IMR-90 (cell line): ENCODE measurements at regions of chr4 and their contacts with region 1.

Region 1: DNA sequence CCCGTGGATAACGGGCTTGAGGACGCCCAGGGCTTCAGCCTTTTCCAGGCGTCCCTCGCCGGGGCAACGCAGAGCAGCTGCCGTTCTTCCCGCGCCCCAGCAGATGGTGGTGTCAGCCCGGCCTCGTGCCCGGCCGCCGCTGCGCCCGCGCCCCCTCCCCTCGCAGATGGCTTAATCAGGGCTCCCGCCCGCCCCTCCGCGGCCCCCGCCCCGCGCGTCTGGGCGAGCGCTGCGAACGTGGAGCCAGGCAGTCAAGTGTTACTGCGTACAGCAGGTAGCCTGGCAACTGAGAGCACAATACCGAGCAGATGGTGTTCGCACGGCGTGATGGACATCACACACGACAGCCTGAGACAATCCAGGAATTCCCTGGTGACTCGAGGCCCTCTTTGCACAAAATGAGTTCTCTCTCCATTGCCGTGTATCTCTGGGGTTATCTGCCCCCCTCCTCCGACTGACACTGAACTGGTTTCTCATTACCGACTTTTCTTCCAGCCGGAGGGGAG is 69.3 kb downstream of the MGST2 start:
- DNase-seq: peak; percentile 75
- ATAC-seq: peak; percentile 96
- H3K4me3 ChIP-seq: peak overlapping the region; percentile 52
- H3K27ac ChIP-seq: peak overlapping the region; percentile 15
- H3K4me1 ChIP-seq: peaks cover 6% of the 10 kb centered on the region
- H3K27me3 ChIP-seq: no peaks in the 10 kb centered on the region
- CTCF ChIP-seq: peak; percentile 77
- POLR2A ChIP-seq: no peak
- RAD21 ChIP-seq: peak; percentile 85

Region 2: GRCh38 chr4:139656614-139657486 is 78.1 kb before region 1 on chr4:
- CTCF ChIA-PET with region 1: interaction called, 4 read pairs
- POLR2A ChIA-PET with region 1: no interaction called
- dilution Hi-C with region 1: no loop called
- in situ Hi-C with region 1: no loop called
- intact Hi-C with region 1: loop called (anchors 5 kb)
- DNase-seq: peak; percentile 78
- ATAC-seq: peak; percentile 92
- H3K4me3 ChIP-seq: no peak overlapping the region
- H3K27ac ChIP-seq: peak overlapping the region; percentile 18; the same call in 1 of the 2 replicates
- H3K4me1 ChIP-seq: peaks cover 6% of the 10 kb centered on the region
- H3K27me3 ChIP-seq: no peaks in the 10 kb centered on the region
- CTCF ChIP-seq: peak; percentile 93
- POLR2A ChIP-seq: no peak
- RAD21 ChIP-seq: peak; percentile 52

Region 3: DNA sequence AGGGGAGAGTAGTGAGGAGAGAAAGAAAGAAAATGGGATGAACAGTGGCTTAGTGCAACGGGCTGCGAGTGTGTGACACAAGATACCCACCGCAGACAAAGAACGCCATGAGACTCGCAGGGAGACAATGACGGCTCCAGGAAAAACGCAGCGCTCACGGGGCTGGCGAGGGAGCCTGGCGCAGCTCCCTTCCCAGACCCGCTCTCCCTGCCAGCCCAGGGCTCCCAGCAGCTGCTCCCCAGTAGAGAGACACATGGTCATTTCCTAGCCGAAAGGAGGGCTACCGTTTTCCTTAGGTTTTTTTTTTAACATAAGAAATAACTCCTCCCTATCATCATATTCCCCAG is 269.6 kb after region 1 on chr4:
- CTCF ChIA-PET with region 1: interaction called, 5 read pairs
- POLR2A ChIA-PET with region 1: no interaction called
- dilution Hi-C with region 1: no loop called
- in situ Hi-C with region 1: loop called (anchors 5 kb)
- intact Hi-C with region 1: loop called (anchors 5 kb)
- DNase-seq: peak; percentile 51
- ATAC-seq: peak; percentile 86
- H3K4me3 ChIP-seq: peak overlapping the region; percentile 22
- H3K27ac ChIP-seq: no peak overlapping the region
- H3K4me1 ChIP-seq: peaks cover 2% of the 10 kb centered on the region; the same call in 1 of the 2 replicates
- H3K27me3 ChIP-seq: no peaks in the 10 kb centered on the region
- CTCF ChIP-seq: no peak
- POLR2A ChIP-seq: no peak
- RAD21 ChIP-seq: peak; percentile 16; the same call in 1 of the 2 replicates

Region 4: GRCh38 chr4:140153718-140154571 is 419.0 kb after region 1 on chr4 and contains the start of gene MAML3:
- CTCF ChIA-PET with region 1: no interaction called
- POLR2A ChIA-PET with region 1: no interaction called
- dilution Hi-C with region 1: no loop called
- in situ Hi-C with region 1: loop called (anchors 10 kb)
- intact Hi-C with region 1: loop called (anchors 1 kb)
- DNase-seq: peak; percentile 96
- ATAC-seq: peak; percentile 45
- H3K4me3 ChIP-seq: peak within 1 kb of the TSS; percentile 90
- H3K27ac ChIP-seq: peak within 1 kb of the TSS; percentile 97
- H3K4me1 ChIP-seq: peaks cover 3% of the 10 kb centered on the region; the same call in 1 of the 2 replicates
- H3K27me3 ChIP-seq: no peaks in the 10 kb centered on the region
- CTCF ChIP-seq: no peak
- POLR2A ChIP-seq: peak; percentile 62; the same call in 1 of the 2 replicates
- RAD21 ChIP-seq: peak; percentile 45
- total RNA-seq, gene MAML3: 0.90 and 1.1 TPM in 2 replicates

Region 5: GRCh38 chr4:140326395-140326993 is 591.6 kb after region 1 on chr4:
- CTCF ChIA-PET with region 1: no interaction called
- POLR2A ChIA-PET with region 1: no interaction called
- dilution Hi-C with region 1: no loop called
- in situ Hi-C with region 1: no loop called
- intact Hi-C with region 1: loop called (anchors 1 kb)
- DNase-seq: peak; percentile 65
- ATAC-seq: peak; percentile 85
- H3K4me3 ChIP-seq: no peak overlapping the region
- H3K27ac ChIP-seq: no peak overlapping the region
- H3K4me1 ChIP-seq: no peaks in the 10 kb centered on the region
- H3K27me3 ChIP-seq: no peaks in the 10 kb centered on the region
- CTCF ChIP-seq: peak; percentile 74
- POLR2A ChIP-seq: no peak
- RAD21 ChIP-seq: peak; percentile 84

Region 6: DNA sequence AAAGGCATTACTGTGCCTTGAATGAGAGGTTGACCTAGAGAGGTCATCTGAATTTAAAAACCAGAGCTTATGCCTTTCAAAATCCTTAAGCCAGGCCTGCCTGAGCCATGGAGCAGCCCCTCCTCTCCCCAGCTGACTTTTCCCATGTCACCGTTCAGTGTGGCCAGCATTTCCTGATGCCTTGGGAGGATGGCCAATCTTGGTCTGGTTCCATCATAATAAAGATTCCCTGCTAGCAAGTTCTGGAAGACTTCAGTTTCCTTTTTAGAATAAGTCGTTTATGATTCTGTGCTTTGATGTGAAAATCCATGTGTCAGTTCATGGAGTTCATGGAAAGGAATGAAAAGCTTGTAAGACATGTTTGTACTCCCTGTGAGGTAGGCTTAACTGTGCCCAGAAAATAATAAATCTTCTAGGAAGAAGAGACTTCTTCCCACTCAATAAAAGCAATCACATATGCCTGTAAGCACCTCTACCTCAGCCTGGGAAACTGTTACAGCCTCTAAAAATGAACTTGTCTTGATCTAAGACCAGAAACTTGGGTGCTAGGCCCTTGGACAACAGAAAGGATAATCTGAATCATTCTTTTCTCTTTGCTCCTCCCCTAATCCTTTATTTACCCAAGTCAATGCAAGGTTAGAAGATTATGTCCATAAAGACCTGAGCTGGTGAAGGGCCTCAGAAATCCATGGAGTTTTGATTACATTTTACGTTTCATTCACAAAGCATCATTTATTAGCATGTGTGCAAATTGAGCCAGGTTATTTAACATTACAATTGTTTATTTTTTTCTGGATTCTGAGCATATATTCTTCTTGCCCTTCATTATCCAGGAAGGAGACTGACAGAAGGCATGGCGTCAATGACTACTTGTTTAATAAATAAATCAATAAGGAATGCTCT is 1105.2 kb after region 1 on chr4:
- CTCF ChIA-PET with region 1: no interaction called
- POLR2A ChIA-PET with region 1: no interaction called
- dilution Hi-C with region 1: no loop called
- in situ Hi-C with region 1: no loop called
- intact Hi-C with region 1: loop called (anchors 10 kb)
- DNase-seq: peak; percentile 5
- ATAC-seq: no peak; the same call in 1 of the 2 replicates
- H3K4me3 ChIP-seq: no peak overlapping the region
- H3K27ac ChIP-seq: no peak overlapping the region
- H3K4me1 ChIP-seq: no peaks in the 10 kb centered on the region
- H3K27me3 ChIP-seq: peaks cover 14% of the 10 kb centered on the region
- CTCF ChIP-seq: no peak
- POLR2A ChIP-seq: no peak
- RAD21 ChIP-seq: no peak